CD4-positive, alpha-beta T cell (primary cell): ENCODE measurements at regions of chr1 and their contacts with region 1.

Region 1: GRCh38 chr1:28248283-28249012 is 10.9 kb upstream of the SESN2 start:
- DNase-seq: peak; percentile 70 to 91 (median 78)
- ATAC-seq: peak; percentile 23
- H3K4me3 ChIP-seq: peak overlapping the region; percentile 78
- H3K4me3 Mint-ChIP-seq: peak overlapping the region; percentile 87
- H3K27ac ChIP-seq: peak overlapping the region; percentile 80 to 99
- H3K27ac Mint-ChIP-seq: peak overlapping the region; percentile 86
- H3K4me1 ChIP-seq: peaks cover 54% of the 10 kb centered on the region
- H3K4me1 Mint-ChIP-seq: peaks cover 49% of the 10 kb centered on the region
- H3K27me3 ChIP-seq: no peaks in the 10 kb centered on the region
- H3K27me3 Mint-ChIP-seq: no peaks in the 10 kb centered on the region
- CTCF ChIP-seq: peak; percentile 92

Region 2: GRCh38 chr1:28329395-28330153 is 81.1 kb after region 1 on chr1:
- CTCF ChIA-PET with region 1: interaction called, 27 read pairs
- POLR2A ChIA-PET with region 1: interaction called, 88 read pairs
- intact Hi-C with region 1: loop called (anchors 1 to 2 kb)
- DNase-seq: peak in 10 of 14 experiments; percentile 17 to 73 (median 36)
- ATAC-seq: peak; percentile 21
- H3K4me3 ChIP-seq: peak overlapping the region; percentile 67
- H3K4me3 Mint-ChIP-seq: peak overlapping the region; percentile 94
- H3K27ac ChIP-seq: peak overlapping the region; percentile 90 to 93
- H3K27ac Mint-ChIP-seq: peak overlapping the region; percentile 88
- H3K4me1 ChIP-seq: peaks cover 25% of the 10 kb centered on the region
- H3K4me1 Mint-ChIP-seq: peaks cover 35% of the 10 kb centered on the region
- H3K27me3 ChIP-seq: no peaks in the 10 kb centered on the region
- H3K27me3 Mint-ChIP-seq: no peaks in the 10 kb centered on the region
- CTCF ChIP-seq: no peak

Region 3: DNA sequence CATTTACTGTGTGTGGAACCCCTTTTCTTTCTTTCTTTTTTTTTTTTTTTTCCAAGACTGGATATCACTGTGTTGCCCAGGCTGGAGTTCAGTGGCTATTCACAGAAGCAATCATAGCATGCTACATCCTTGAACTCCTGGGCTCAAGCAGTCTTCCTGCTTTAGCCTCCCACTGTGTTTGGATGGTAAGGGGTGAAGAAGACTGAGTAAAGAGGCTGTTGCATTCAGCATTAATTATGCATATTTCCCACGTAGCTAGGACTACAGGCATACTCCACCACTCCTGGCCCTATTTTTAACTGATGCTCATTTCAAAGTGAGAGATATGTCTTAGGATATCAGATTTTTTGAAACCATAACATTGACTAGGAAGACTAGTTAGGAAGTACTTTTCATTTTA is 160.6 kb after region 1 on chr1:
- CTCF ChIA-PET with region 1: no interaction called
- POLR2A ChIA-PET with region 1: no interaction called
- intact Hi-C with region 1: loop called in 1 of 2 experiments (anchors 2 kb)
- DNase-seq: no peak
- ATAC-seq: no peak
- H3K4me3 ChIP-seq: no peak overlapping the region
- H3K4me3 Mint-ChIP-seq: no peak overlapping the region
- H3K27ac ChIP-seq: no peak overlapping the region
- H3K27ac Mint-ChIP-seq: no peak overlapping the region
- H3K4me1 ChIP-seq: peaks cover 4% of the 10 kb centered on the region
- H3K4me1 Mint-ChIP-seq: peaks cover 3% of the 10 kb centered on the region
- H3K27me3 ChIP-seq: no peaks in the 10 kb centered on the region
- H3K27me3 Mint-ChIP-seq: no peaks in the 10 kb centered on the region
- CTCF ChIP-seq: no peak

Region 4: DNA sequence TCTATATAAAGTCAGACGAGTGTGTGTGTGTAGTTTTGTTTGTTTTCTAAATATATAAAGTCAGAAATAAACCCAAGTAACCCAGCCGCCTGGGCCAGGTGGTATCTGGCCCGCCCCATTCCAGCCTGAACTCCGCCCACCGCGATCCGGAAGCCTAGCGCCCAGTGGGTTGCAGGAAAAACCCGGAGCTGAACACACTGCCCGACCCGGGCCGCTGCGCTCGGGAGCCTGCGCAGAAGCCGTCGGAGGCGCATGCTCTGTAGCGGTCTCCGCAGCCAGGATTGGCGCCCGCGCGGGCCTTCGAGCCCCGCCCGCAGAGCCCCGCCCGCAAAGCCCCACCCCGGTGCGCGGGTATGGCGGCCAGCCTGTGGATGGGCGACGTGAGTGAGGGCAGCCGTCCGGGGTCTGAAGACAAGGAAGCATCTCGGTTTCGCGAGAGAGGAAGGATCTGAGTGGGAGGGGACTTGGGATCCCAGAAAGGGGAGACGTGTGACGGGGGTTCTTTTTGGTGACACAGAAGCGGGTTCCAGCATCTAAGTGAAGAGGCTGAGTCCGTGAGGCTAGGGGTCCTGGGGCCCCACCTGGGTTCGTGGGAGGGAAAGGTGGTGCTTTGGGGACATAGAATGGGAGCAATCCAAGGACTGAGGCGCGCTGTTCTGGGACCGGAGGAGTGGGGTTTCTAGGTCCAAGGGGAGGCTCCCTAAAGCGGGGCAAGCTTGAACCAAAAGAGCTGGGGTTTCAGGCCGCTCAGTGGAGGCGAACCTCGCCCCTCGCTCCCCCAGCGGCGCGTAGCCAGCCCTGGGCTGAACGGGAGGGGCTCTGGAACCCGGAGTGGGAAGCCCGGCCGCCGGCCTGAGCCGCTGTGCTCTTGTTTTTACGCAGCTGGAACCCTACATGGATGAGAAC is 304.6 kb after region 1 on chr1 and contains the start of gene TRNAU1AP:
- CTCF ChIA-PET with region 1: interaction called, 4 read pairs
- POLR2A ChIA-PET with region 1: no interaction called
- intact Hi-C with region 1: loop called in 1 of 2 experiments (anchors 2 kb)
- DNase-seq: peak; percentile 94 to 99 (median 96)
- ATAC-seq: peak; percentile 95
- H3K4me3 ChIP-seq: peak within 1 kb of the TSS; percentile 84
- H3K4me3 Mint-ChIP-seq: peak within 1 kb of the TSS; percentile 99
- H3K27ac ChIP-seq: peak within 1 kb of the TSS; percentile 66 to 68
- H3K27ac Mint-ChIP-seq: peak within 1 kb of the TSS; percentile 99
- H3K4me1 ChIP-seq: peaks cover 22% of the 10 kb centered on the region
- H3K4me1 Mint-ChIP-seq: peaks cover 31% of the 10 kb centered on the region
- H3K27me3 ChIP-seq: no peaks in the 10 kb centered on the region
- H3K27me3 Mint-ChIP-seq: no peaks in the 10 kb centered on the region
- CTCF ChIP-seq: no peak
- total RNA-seq, gene TRNAU1AP: 21.4 to 24.2 TPM

Region 5: GRCh38 chr1:28642847-28643635 is 394.6 kb after region 1 on chr1 and contains the start of gene TAF12:
- CTCF ChIA-PET with region 1: no interaction called
- POLR2A ChIA-PET with region 1: interaction called, 11 read pairs
- intact Hi-C with region 1: loop called in 1 of 2 experiments (anchors 10 kb)
- DNase-seq: peak; percentile 87 to 98 (median 92)
- ATAC-seq: peak; percentile 81
- H3K4me3 ChIP-seq: peak within 1 kb of the TSS; percentile 99
- H3K4me3 Mint-ChIP-seq: peak within 1 kb of the TSS; percentile 92
- H3K27ac ChIP-seq: peak within 1 kb of the TSS; percentile 94
- H3K27ac Mint-ChIP-seq: peak within 1 kb of the TSS; percentile 97
- H3K4me1 ChIP-seq: peaks cover 54% of the 10 kb centered on the region
- H3K4me1 Mint-ChIP-seq: peaks cover 62% of the 10 kb centered on the region
- H3K27me3 ChIP-seq: no peaks in the 10 kb centered on the region
- H3K27me3 Mint-ChIP-seq: no peaks in the 10 kb centered on the region
- CTCF ChIP-seq: peak; percentile 63
- total RNA-seq, gene TAF12: 7.0 to 8.0 TPM